Activated CD8-positive, alpha-beta memory T cell treated with anti-CD3 and anti-CD28 coated beads, Interleukin-2, amount 10 ng/mL, durations not matched to agents 7 days and 5 days (primary cell): ENCODE measurements at regions of chr1 and their contacts with region 1.

Region 1: DNA sequence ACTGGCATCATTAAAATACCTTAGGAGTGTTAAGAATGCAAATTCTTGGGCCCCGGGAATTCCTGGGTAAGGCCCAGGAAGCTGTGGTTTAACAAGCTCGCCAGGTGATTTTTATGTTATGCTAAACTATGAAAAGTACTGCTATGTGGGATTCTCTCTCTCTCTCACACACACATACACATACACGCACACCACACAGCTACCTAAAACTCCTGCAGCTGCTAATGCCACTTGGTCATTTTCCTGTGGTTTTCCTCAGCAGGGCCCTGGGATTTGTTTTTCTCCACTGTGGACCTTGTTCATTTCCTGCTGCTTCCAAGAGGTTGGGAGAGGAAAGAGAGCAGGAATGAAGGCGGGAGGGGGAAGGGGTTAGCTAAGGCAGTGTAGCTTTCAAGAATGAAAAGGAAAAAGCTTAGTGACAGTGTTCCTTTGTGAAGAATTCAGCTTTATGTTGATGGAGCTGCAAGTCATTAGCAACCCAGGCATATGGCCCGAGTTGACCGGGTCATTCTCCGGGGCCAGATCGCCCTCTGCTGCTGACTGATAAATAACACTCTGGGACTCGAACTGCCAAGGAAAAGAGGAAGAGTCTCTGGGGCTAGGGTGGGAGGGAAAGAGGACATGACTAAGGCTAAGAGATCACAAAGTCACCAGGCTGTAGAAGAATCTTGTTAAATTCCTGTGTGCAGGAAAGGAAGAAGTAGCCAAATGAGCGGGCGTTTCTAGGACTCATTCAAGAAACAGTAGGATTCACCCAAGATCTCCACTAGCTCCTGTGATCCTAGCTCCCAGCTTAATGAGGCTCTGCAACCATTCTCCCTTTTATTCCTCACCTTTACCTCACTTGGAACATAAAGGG is 30.5 kb upstream of the LRIG2 start:
- DNase-seq: peak; percentile 56
- ATAC-seq: no peak
- H3K4me3 Mint-ChIP-seq: no peak overlapping the region
- H3K27ac Mint-ChIP-seq: peak overlapping the region; percentile 25
- H3K4me1 Mint-ChIP-seq: peaks cover 30% of the 10 kb centered on the region
- H3K27me3 Mint-ChIP-seq: no peaks in the 10 kb centered on the region

Region 2: DNA sequence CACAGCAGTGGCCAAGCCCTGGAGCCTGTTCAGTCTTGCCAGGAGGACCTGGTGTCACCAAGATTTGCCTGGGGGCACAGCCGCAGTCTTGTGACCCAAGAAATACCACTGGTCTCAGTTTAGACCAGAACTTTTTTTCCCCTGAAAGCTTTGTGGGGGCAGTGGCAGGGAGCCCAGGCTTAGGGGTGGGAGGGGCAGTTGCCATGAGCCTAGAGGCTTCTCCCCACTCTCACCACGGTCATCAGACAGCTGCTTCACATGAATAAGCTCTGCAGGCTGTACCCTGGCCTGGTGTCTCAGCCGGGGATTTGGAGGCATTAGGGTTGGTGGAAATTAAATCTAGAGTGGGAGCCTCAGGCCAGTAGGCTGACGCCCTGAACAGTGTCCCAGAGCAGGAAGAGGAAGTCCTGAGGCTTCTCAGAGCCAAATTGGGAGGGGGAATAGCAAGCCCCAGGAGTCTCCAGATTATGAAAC is 160.2 kb before region 1 on chr1:
- CTCF ChIA-PET with region 1: interaction called, 25 read pairs
- DNase-seq: no peak
- ATAC-seq: no peak
- H3K4me3 Mint-ChIP-seq: no peak overlapping the region
- H3K27ac Mint-ChIP-seq: no peak overlapping the region
- H3K4me1 Mint-ChIP-seq: peaks cover 2% of the 10 kb centered on the region
- H3K27me3 Mint-ChIP-seq: peaks cover 28% of the 10 kb centered on the region